Panc1 (cell line): ENCODE measurements at regions of chr17 and their contacts with region 1.

Region 1: DNA sequence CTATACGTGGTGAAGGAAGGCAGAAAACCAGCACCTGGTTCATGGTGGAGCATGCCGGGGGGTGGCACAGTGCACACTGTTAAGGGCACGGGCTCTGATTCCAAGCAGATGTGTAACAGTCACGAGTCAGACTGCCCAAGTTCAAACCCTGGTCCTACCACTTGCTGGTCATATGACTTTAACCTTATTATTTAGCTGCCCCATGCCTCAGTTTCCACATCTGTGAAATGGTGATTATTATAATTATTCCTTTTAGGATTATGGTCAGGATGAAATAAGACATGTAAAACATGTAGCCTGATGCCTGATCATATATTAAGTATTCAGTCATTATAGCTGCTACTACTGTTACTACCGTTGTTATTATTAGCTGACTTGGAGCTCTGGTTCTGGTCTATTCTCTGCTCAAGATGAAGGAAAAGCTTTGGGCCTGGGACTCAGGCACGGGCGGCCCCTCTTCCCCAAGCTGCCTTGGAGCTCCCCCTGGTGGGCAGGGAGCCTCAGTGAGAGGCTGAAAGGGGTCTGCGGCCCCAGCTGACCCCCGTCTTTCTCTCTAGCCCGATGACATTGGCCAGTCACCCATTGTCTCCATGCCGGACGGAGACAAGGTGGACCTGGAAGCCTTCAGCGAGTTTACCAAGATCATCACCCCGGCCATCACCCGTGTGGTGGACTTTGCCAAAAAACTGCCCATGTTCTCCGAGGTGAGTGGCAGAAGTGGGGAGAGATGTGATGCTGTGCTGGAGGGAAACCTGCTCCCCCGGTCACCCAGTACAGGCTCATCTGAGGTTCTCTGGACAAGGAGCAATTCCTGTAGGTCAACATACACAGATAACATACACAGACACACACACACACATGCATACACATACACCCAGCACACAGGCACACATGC is 14.0 kb downstream of the NR1D1 start:
- DNase-seq: no peak
- ATAC-seq: peak; percentile 84
- H3K4me3 ChIP-seq: no peak overlapping the region
- H3K27ac ChIP-seq: no peak overlapping the region
- H3K4me1 ChIP-seq: peaks cover 7% of the 10 kb centered on the region; the same call in 1 of the 2 replicates
- H3K27me3 ChIP-seq: no peaks in the 10 kb centered on the region
- CTCF ChIP-seq: peak; percentile 96

Region 2: GRCh38 chr17:40019140-40019991 is 67.0 kb before region 1 on chr17:
- CTCF ChIA-PET with region 1: interaction called, 13 read pairs
- POLR2A ChIA-PET with region 1: no interaction called
- in situ Hi-C with region 1: no loop called
- intact Hi-C with region 1: no loop called
- DNase-seq: no peak
- ATAC-seq: 0 out of 2 replicates have a peak, but pooled peaks have one; percentile 36
- H3K4me3 ChIP-seq: no peak overlapping the region
- H3K27ac ChIP-seq: no peak overlapping the region
- H3K4me1 ChIP-seq: peaks cover 12% of the 10 kb centered on the region
- H3K27me3 ChIP-seq: no peaks in the 10 kb centered on the region
- CTCF ChIP-seq: no peak

Region 3: DNA sequence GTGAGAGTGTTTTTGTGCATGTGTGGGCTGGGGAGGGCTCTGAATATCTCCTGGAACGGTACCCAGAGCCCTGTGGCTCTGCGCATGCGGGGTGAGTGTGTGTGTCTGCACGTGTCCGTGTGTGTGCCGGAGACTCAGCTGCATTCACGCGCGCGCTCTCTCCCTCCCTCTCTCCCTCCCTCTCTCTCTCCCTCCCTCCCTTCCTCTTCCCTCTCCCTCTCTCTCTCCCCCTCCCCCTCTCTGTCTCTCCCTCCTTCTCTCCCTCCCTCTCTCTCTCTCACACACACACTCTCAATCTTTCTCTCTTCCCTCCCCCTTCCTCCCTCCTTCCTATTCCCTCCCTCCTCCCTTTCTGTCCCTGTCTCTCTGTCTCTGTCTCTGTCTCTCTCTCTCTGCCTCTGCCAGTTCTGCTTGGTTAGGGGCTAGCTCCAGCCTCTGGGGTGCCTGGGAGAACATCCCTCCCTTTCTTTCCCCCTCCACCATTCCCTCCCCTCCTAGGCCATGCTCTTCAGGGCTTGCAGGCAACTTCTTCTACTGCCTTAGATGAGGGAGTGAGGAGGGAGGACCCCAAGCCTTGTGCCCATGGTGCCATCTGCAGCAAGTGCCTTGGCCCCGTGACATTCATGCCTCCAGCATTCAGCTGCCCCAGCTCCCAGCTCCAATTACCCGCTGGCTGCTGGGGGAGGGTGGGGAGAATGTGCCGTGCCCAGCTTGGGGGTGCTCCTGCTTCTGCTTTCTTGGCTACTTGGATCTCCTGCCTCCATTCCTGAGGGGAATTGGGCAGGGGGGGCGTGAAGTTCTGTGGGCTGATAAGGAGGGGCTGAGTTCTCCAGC is 17.3 kb before region 1 on chr17:
- CTCF ChIA-PET with region 1: interaction called, 6 read pairs
- POLR2A ChIA-PET with region 1: interaction called, 26 read pairs
- in situ Hi-C with region 1: no loop called
- intact Hi-C with region 1: no loop called
- DNase-seq: no peak
- ATAC-seq: peak; percentile 37; the same call in 1 of the 2 replicates
- H3K4me3 ChIP-seq: peak overlapping the region; percentile 22 to 52
- H3K27ac ChIP-seq: peak overlapping the region; percentile 78
- H3K4me1 ChIP-seq: peaks cover 71% of the 10 kb centered on the region
- H3K27me3 ChIP-seq: no peaks in the 10 kb centered on the region
- CTCF ChIP-seq: no peak

Region 4: GRCh38 chr17:40135817-40136216 is 49.4 kb after region 1 on chr17:
- CTCF ChIA-PET with region 1: no interaction called
- POLR2A ChIA-PET with region 1: no interaction called
- in situ Hi-C with region 1: no loop called
- intact Hi-C with region 1: no loop called
- DNase-seq: no peak
- ATAC-seq: no peak
- H3K4me3 ChIP-seq: no peak overlapping the region
- H3K27ac ChIP-seq: no peak overlapping the region
- H3K4me1 ChIP-seq: peaks cover 4% of the 10 kb centered on the region; the same call in 1 of the 2 replicates
- H3K27me3 ChIP-seq: no peaks in the 10 kb centered on the region
- CTCF ChIP-seq: no peak